G401 (cell line): ENCODE measurements at regions of chr19 and their contacts with region 1.

Region 1: DNA sequence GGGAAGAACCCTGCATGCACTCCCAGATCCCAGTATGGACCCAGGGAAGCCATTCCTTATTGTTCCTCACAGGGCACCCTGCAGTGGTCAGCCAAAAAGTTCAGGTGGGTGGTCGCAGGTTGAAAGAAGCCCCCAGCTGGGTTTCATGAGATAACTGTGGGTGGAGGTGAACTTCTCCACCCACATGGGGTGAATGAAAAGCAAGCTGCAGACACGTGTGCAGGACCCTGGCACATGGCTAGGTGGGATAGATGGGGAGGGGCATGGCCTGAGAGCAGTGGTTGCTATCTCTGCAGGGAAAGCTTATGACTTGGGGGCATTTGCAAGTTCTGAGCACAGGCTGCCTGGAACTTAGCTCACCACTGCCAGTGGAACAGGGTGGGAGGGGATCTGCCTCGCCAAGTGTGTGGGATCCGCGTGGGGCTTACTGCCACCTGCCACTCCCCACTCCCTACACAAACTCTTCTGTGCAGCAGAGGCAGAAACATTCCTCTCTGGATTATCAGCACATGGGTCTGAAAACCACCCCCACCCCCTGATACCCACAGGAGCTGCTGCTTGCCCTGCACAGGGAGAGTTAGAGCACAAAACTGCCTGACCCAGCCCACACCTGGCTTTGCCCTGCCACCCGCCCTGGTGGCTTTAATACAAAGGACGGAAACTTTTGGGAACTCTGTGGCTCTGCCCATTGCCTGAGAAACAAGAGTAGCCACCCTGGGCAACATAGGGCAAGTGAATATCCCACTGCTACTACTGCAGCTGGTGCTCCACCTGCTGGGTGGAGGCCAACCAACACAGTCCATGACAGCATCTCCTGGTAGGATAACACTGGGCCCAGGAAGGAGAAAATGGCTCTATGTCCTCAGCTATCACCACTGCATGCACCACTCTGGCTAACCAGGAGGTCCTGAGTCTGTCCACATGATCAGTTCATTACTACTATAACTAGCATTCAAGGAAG is 24.4 kb downstream of the PLA2G4C start:
- DNase-seq: no peak

Region 2: GRCh38 chr19:47994209-47994802 is 91.9 kb before region 1 on chr19 and contains the start of gene ELSPBP1:
- in situ Hi-C with region 1: loop called (anchors 5 kb)
- DNase-seq: no peak
- total RNA-seq, gene ELSPBP1: not detected in 2 replicates